ENCODE measurements at regions of chr19 and their contacts with region 1.

Region 1: DNA sequence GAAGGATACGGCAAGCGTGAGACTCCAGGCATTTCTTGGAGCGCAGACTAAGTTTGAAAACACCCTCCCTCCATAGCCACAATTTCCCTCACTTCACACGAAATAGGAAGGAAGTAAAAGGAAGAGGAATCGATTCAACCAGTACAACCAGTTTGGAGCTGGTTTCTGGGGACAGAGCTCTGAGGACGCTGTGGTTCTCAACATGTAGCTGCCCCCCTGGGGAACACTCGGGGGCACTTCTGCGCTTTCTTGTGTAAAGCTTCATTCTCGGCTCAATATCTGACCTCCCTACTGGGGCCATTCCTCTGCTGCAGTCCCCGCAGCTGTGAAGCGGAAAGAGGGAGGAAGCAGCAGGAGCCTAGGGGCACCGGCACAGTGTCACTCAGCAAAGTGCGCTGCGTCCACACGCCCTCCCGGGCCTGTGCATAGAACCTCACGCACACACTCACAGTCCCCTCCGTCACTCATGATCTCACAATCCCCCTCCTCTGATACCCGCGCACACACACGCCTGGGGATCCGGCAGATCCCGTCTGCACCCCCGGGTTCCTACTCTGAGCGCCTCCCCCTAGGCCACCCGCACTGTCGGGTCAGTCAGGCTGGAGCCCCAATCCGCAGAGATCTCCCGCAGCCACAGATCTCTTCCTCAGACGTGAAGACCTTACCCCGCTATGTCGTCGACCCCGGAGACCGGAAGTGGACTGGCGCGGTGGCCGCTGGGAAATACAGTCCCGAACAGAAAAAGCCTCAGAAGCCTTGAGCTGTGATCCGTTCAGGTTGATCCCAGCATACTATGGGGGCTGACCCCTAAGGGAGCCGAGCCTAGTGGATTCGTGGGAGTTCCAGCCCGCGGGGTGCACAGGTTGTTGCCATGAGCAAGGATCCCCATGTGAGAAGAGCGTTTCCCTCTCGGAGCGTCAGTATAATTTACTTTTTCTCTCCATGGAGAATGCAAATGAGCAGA is at the start of gene ZNF780A:
- DNase-seq: peak; percentile 75
- ATAC-seq: peak; percentile 88
- H3K4me3 ChIP-seq: peak within 1 kb of the TSS; percentile 85 to 94 (median 88)
- H3K4me3 Mint-ChIP-seq: peak within 1 kb of the TSS; percentile 99
- H3K27ac ChIP-seq: peak within 1 kb of the TSS; percentile 79 to 86
- H3K27ac Mint-ChIP-seq: peak within 1 kb of the TSS; percentile 99
- H3K4me1 ChIP-seq: peaks cover 12 to 16% of the 10 kb centered on the region in 2 donors
- H3K4me1 Mint-ChIP-seq: peaks cover 37% of the 10 kb centered on the region
- H3K27me3 ChIP-seq: peaks cover 0 to 7% (median 4%) of the 10 kb centered on the region in 4 experiments
- H3K27me3 Mint-ChIP-seq: peaks cover 21% of the 10 kb centered on the region
- CTCF ChIP-seq: no peak
- total RNA-seq, gene ZNF780A: 32.3 and 32.8 TPM in 2 replicates

Region 2: GRCh38 chr19:40035996-40036395 is 54.5 kb before region 1 on chr19:
- CTCF ChIA-PET with region 1: no interaction called
- POLR2A ChIA-PET with region 1: no interaction called
- intact Hi-C with region 1: no loop called
- DNase-seq: no peak
- ATAC-seq: no peak
- H3K4me3 ChIP-seq: no peak overlapping the region
- H3K4me3 Mint-ChIP-seq: no peak overlapping the region
- H3K27ac ChIP-seq: no peak overlapping the region
- H3K27ac Mint-ChIP-seq: no peak overlapping the region
- H3K4me1 ChIP-seq: no peaks in the 10 kb centered on the region
- H3K4me1 Mint-ChIP-seq: no peaks in the 10 kb centered on the region
- H3K27me3 ChIP-seq: no peaks in the 10 kb centered on the region
- H3K27me3 Mint-ChIP-seq: no peaks in the 10 kb centered on the region
- CTCF ChIP-seq: no peak

Region 3: DNA sequence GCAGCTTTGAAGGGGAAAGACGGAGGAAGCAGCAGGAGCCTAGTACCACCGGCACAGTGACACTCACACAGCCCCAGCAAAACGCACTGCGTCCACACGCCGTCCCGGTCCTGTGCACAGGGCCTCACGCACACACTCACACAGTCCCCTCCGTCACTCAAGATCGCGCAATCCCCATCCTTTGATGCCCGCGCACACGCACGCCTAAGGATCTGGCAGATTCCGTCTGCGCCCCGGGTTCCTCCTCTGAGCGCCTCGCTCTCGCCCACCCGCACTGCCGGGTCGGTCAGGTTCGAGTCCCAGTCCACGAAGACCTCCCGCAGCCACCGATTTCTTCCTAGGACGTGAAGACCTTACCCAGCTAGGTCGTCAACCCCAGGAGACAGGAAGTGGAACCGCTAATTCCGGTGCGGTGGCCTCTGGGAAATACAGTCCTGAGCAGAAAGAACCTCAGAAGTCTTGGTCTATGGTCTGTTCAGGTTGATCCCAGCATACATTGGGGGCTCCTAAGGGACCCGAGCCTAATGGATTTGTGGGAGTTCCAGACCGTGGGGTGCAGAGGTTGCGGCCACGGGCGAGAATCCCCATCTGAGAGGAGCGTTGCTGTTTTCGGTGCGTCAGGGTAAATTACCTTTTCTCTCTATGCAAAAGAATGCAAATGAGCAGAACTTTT is 34.6 kb before region 1 on chr19 and contains the start of gene ZNF780B:
- CTCF ChIA-PET with region 1: interaction called, 4 read pairs
- POLR2A ChIA-PET with region 1: interaction called, 5 read pairs
- intact Hi-C with region 1: loop called (anchors 2 kb)
- DNase-seq: peak; percentile 82
- ATAC-seq: peak; percentile 93
- H3K4me3 ChIP-seq: peak within 1 kb of the TSS; percentile 65 to 86 (median 77)
- H3K4me3 Mint-ChIP-seq: peak within 1 kb of the TSS; percentile 99
- H3K27ac ChIP-seq: peak within 1 kb of the TSS; percentile 76 to 78
- H3K27ac Mint-ChIP-seq: peak within 1 kb of the TSS; percentile 94
- H3K4me1 ChIP-seq: peaks cover 13 to 17% of the 10 kb centered on the region in 2 donors
- H3K4me1 Mint-ChIP-seq: peaks cover 50% of the 10 kb centered on the region
- H3K27me3 ChIP-seq: no peaks in the 10 kb centered on the region
- H3K27me3 Mint-ChIP-seq: no peaks in the 10 kb centered on the region
- CTCF ChIP-seq: no peak
- total RNA-seq, gene ZNF780B: 57.4 and 57.6 TPM in 2 replicates

Region 4: GRCh38 chr19:40104754-40105153 is 14.2 kb after region 1 on chr19:
- CTCF ChIA-PET with region 1: no interaction called
- POLR2A ChIA-PET with region 1: no interaction called
- intact Hi-C with region 1: no loop called
- DNase-seq: no peak
- ATAC-seq: no peak
- H3K4me3 ChIP-seq: no peak overlapping the region
- H3K4me3 Mint-ChIP-seq: no peak overlapping the region
- H3K27ac ChIP-seq: no peak overlapping the region
- H3K27ac Mint-ChIP-seq: no peak overlapping the region
- H3K4me1 ChIP-seq: no peaks in the 10 kb centered on the region
- H3K4me1 Mint-ChIP-seq: no peaks in the 10 kb centered on the region
- H3K27me3 ChIP-seq: no peaks in the 10 kb centered on the region
- H3K27me3 Mint-ChIP-seq: no peaks in the 10 kb centered on the region
- CTCF ChIP-seq: no peak